ENCODE measurements at regions of chr1 and their contacts with region 1.

Region 1: GRCh38 chr1:162878000-162878596 is 17.1 kb upstream of the CCDC190 start:
- DNase-seq: peak; percentile 73

Region 2: GRCh38 chr1:162740755-162741154 is 137.3 kb before region 1 on chr1:
- CTCF ChIA-PET with region 1: no interaction called
- POLR2A ChIA-PET with region 1: no interaction called
- DNase-seq: no peak

Region 3: GRCh38 chr1:163069142-163069541 is 191.0 kb after region 1 on chr1 and contains the start of gene RGS4:
- CTCF ChIA-PET with region 1: interaction called, 16 read pairs
- POLR2A ChIA-PET with region 1: no interaction called
- DNase-seq: peak; percentile 81

Measured in HEK293T (cell line).